ENCODE measurements at regions of chr6 and their contacts with region 1.

Region 1: DNA sequence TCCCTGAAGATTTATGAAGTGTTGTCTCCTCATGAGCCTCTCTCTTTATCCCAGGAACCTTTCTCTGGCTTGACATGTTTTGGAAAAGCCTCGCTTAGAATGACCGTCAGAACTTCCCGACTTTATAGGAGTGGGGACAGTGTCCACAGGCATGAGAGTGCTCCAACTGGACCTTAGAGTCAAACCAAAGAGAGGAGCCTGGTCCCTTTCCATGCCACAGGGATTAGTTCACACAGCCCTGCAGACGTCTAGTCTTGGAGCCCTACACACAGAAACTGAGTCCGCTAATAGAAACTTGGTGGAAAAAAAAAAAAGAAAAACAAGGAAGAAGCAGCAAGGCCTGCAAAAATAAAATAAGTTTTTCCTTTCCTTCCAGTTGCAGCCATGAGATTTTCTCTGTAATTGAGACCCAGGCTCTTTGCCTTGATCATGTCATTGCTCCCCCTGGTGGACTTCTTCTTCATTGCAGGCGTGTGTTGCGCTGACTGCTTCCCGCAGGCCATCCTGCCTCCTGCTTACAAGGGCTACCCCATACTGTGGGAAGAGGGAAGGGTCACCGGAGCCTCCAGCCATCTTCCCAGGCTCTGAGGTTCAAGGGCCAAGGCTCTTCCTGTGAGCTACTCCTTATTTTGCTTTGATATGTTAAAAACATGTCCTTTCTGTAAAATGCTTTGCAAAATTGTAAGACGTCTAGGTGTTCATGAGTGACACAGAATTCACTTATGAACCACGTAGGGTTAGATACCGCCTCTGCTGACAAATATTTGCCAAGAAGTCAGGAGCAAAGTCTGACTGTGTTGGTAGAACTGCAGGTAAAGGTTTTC is 201.0 kb downstream of the UST start:
- DNase-seq: peak; percentile 82
- ATAC-seq: peak; percentile 91
- H3K4me3 ChIP-seq: no peak overlapping the region
- H3K27ac ChIP-seq: no peak overlapping the region
- H3K4me1 ChIP-seq: peaks cover 4% of the 10 kb centered on the region
- H3K27me3 ChIP-seq: no peaks in the 10 kb centered on the region
- CTCF ChIP-seq: peak; percentile 79
- POLR2A ChIP-seq: no peak
- RAD21 ChIP-seq: peak; percentile 88

Region 2: GRCh38 chr6:148559848-148560433 is 387.9 kb before region 1 on chr6:
- CTCF ChIA-PET with region 1: no interaction called
- POLR2A ChIA-PET with region 1: no interaction called
- dilution Hi-C with region 1: no loop called
- in situ Hi-C with region 1: no loop called
- intact Hi-C with region 1: loop called (anchors 5 kb)
- DNase-seq: peak; percentile 67
- ATAC-seq: peak; percentile 98
- H3K4me3 ChIP-seq: peak overlapping the region; percentile 60
- H3K27ac ChIP-seq: no peak overlapping the region; the same call in 1 of the 2 replicates
- H3K4me1 ChIP-seq: no peaks in the 10 kb centered on the region; the same call in 1 of the 2 replicates
- H3K27me3 ChIP-seq: no peaks in the 10 kb centered on the region
- CTCF ChIP-seq: peak; percentile 98
- POLR2A ChIP-seq: peak; percentile 48; the same call in 1 of the 2 replicates
- RAD21 ChIP-seq: peak; percentile 95

Region 3: DNA sequence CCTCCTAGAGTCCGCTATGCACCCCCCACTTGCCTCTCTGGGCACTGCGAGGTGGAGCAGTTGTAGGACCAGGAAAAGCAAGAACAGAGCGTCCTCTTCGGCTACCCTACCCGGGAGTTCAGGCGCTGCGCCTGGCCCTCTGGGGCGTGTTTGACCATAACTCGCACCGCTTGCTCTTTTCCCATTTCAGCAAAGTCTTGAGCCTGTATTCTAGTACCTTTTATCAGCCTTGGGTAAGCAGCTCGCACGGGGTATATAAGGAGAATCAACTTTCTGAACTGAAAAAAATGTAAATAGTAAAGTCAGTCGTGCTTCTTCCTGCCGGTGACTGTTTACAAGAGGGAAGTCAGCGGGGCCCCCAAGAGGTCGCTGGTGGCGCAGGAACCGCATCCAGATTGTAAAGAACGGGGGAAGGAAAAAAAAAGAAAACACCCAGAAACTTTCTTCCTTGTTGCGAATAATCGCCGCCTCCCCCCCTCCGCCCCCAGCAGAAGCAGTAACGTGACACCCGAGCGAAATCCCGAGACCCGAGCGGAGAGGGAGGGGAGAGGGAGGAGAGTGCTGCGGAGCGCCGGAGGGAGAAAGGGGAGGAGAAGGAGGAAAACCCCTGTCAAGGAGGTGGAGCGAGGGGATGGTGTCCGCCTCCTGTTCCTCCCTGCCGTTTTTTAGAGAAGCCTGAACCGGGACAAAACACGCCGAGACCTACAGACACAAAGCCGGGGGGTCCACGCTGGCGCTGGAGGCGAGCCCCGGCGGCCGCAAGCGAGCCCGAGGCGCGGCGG is 201.3 kb before region 1 on chr6 and contains the start of gene UST:
- CTCF ChIA-PET with region 1: no interaction called
- POLR2A ChIA-PET with region 1: no interaction called
- dilution Hi-C with region 1: no loop called
- in situ Hi-C with region 1: no loop called
- intact Hi-C with region 1: loop called (anchors 1 kb)
- DNase-seq: peak; percentile 95
- ATAC-seq: peak; percentile 92
- H3K4me3 ChIP-seq: peak within 1 kb of the TSS; percentile 87
- H3K27ac ChIP-seq: peak within 1 kb of the TSS; percentile 90
- H3K4me1 ChIP-seq: peaks cover 4% of the 10 kb centered on the region
- H3K27me3 ChIP-seq: no peaks in the 10 kb centered on the region
- CTCF ChIP-seq: peak; percentile 58
- POLR2A ChIP-seq: peak; percentile 57; the same call in 1 of the 2 replicates
- RAD21 ChIP-seq: peak; percentile 69
- total RNA-seq, gene UST: 13.8 and 14.4 TPM in 2 replicates

Region 4: GRCh38 chr6:148997865-148998264 is 50.0 kb after region 1 on chr6:
- CTCF ChIA-PET with region 1: no interaction called
- POLR2A ChIA-PET with region 1: no interaction called
- dilution Hi-C with region 1: no loop called
- in situ Hi-C with region 1: no loop called
- intact Hi-C with region 1: no loop called
- DNase-seq: peak; percentile 73
- ATAC-seq: peak; percentile 68
- H3K4me3 ChIP-seq: no peak overlapping the region
- H3K27ac ChIP-seq: no peak overlapping the region
- H3K4me1 ChIP-seq: peaks cover 11% of the 10 kb centered on the region
- H3K27me3 ChIP-seq: no peaks in the 10 kb centered on the region
- CTCF ChIP-seq: no peak
- POLR2A ChIP-seq: no peak
- RAD21 ChIP-seq: no peak

Measured in IMR-90 (cell line).